Heart right ventricle (tissue), 16 donors: ENCODE measurements at regions of chr2 and their contacts with region 1.

Region 1: DNA sequence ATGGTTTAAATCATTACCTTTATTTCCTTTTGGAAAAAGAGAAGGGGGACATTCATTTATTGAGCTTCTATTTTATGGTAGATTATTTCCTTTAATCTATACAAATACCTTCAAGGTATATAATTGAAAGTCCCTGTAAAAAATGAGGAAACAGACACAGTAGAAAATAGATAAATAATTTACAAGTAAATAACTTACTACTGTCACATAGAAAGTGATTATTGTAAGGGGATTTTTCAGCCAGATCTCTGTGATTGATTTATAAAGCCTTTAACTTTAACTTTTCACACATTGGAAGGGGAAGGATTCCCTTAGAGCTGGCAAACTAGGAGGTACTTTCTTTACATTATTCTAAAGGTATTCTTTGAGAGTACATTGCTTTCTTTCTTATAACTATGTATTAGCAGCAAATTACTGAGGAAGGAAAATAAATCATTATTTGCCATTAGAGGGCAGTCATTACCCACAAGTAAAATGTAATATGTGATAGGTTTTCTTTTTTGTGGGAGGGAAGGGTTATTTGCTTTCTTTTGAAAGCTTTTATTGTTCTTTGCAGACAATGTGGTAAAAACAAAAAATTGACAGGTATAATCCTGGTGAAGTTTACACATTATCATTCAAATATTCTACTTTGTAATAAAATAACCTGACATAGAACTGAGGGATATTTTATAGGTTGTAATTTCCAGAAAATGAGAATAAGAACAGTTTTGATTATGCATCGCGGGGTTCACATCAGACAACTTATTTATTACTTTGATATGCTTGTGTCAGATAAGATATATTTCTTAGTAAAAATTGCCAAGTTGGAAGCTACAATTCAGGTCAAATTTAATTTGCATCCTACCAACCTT is 24.8 kb upstream of the RPE start:
- DNase-seq: no peak
- ATAC-seq: peak in 2 of 8 donors; percentile 33 to 54
- H3K4me3 ChIP-seq: no peak overlapping the region
- H3K27ac ChIP-seq: no peak overlapping the region
- H3K4me1 ChIP-seq: no peaks in the 10 kb centered on the region
- H3K27me3 ChIP-seq: peaks cover 0 to 9% (median 0%) of the 10 kb centered on the region in 7 donors
- CTCF ChIP-seq: peak; percentile 25 to 81 (median 69)

Region 2: DNA sequence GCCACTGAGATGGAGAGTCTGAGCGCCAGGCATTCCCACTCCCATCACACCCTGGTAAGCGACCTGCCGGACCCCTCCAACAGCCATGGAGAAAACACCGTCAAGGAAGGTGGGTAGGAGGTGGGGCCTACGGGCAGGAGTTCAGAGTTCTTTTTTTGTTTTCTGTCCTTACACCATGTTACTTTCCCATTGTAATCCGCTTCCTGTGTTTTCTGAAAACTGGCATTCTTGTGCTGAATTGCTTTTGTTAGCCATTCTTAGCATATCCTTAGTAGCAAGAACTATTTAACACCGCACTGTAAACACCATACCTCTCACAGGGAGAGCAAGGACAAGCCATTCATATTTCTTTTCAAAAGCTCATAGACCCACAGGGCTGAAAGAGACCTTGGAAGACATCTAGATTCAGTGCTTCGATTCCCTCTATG is 159.8 kb before region 1 on chr2:
- intact Hi-C with region 1: no loop called
- DNase-seq: no peak
- ATAC-seq: peak in 3 of 8 donors; percentile 24 to 35 (median 34)
- H3K4me3 ChIP-seq: no peak overlapping the region
- H3K27ac ChIP-seq: peak overlapping the region in 2 of 10 donors; percentile 10 to 50
- H3K4me1 ChIP-seq: no peaks in the 10 kb centered on the region
- H3K27me3 ChIP-seq: no peaks in the 10 kb centered on the region
- CTCF ChIP-seq: no peak

Region 3: GRCh38 chr2:210203157-210203947 is 225.7 kb after region 1 on chr2:
- intact Hi-C with region 1: loop called in 3 of 10 experiments (anchors 2 to 5 kb)
- DNase-seq: no peak
- ATAC-seq: no peak
- H3K4me3 ChIP-seq: no peak overlapping the region
- H3K27ac ChIP-seq: no peak overlapping the region
- H3K4me1 ChIP-seq: no peaks in the 10 kb centered on the region
- H3K27me3 ChIP-seq: peaks cover 0 to 3% (median 0%) of the 10 kb centered on the region in 7 donors
- CTCF ChIP-seq: no peak

Region 4: DNA sequence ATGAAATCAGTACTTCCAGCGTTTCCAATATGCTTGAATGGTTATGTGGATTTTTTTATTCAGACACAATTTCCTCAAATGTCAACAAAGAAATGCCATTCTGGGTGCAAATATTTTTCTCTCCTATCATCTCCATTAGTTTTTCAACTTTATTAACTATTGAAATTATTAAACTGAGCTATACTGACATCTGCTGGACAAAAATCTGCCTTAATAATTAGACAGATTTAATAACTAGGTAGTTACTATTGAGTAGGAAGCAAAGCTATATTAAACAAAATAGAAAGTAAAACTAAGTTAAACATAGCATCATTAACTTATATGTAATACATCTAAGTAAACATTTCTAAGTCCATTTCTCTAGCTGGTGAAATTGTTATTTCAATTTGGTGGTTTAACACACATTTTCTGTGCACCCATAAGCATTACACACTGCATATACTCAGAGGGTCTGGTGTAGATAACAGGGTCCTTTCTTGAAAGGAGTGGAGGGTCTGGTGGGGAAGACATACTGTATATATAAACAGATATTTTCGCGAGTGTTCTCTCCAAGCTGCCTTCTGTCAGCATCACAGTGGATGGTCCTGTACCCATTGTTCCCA is 421.9 kb after region 1 on chr2:
- intact Hi-C with region 1: loop called in 1 of 10 experiments (anchors 10 kb)
- DNase-seq: no peak
- ATAC-seq: no peak
- H3K4me3 ChIP-seq: no peak overlapping the region
- H3K27ac ChIP-seq: no peak overlapping the region
- H3K4me1 ChIP-seq: peaks cover 0 to 9% (median 0%) of the 10 kb centered on the region in 9 donors
- H3K27me3 ChIP-seq: no peaks in the 10 kb centered on the region
- CTCF ChIP-seq: peak in 8 of 9 donors; percentile 44 to 69 (median 52)